MCF 10A (cell line): ENCODE measurements at regions of chr2 and their contacts with region 1.

Region 1: GRCh38 chr2:42859006-42859552 is 66.7 kb upstream of the HAAO start:
- DNase-seq: peak; percentile 82
- H3K4me3 Mint-ChIP-seq: no peak overlapping the region
- H3K27ac Mint-ChIP-seq: no peak overlapping the region
- H3K4me1 Mint-ChIP-seq: peaks cover 12% of the 10 kb centered on the region
- H3K27me3 Mint-ChIP-seq: no peaks in the 10 kb centered on the region
- CTCF ChIP-seq: peak; percentile 91

Region 2: GRCh38 chr2:42547014-42547413 is 312.1 kb before region 1 on chr2:
- CTCF ChIA-PET with region 1: no interaction called
- POLR2A ChIA-PET with region 1: no interaction called
- intact Hi-C with region 1: no loop called
- DNase-seq: no peak
- H3K4me3 Mint-ChIP-seq: no peak overlapping the region
- H3K27ac Mint-ChIP-seq: no peak overlapping the region
- H3K4me1 Mint-ChIP-seq: no peaks in the 10 kb centered on the region
- H3K27me3 Mint-ChIP-seq: no peaks in the 10 kb centered on the region
- CTCF ChIP-seq: no peak

Region 3: GRCh38 chr2:42844901-42845821 is 13.9 kb before region 1 on chr2:
- CTCF ChIA-PET with region 1: interaction called, 12 read pairs
- POLR2A ChIA-PET with region 1: no interaction called
- intact Hi-C with region 1: no loop called
- DNase-seq: no peak
- H3K4me3 Mint-ChIP-seq: no peak overlapping the region
- H3K27ac Mint-ChIP-seq: peak overlapping the region; percentile 32
- H3K4me1 Mint-ChIP-seq: peaks cover 6% of the 10 kb centered on the region
- H3K27me3 Mint-ChIP-seq: no peaks in the 10 kb centered on the region
- CTCF ChIP-seq: no peak

Region 4: GRCh38 chr2:42874949-42875801 is 16.1 kb after region 1 on chr2:
- CTCF ChIA-PET with region 1: interaction called, 10 read pairs
- POLR2A ChIA-PET with region 1: no interaction called
- intact Hi-C with region 1: no loop called
- DNase-seq: no peak
- H3K4me3 Mint-ChIP-seq: no peak overlapping the region
- H3K27ac Mint-ChIP-seq: no peak overlapping the region
- H3K4me1 Mint-ChIP-seq: no peaks in the 10 kb centered on the region
- H3K27me3 Mint-ChIP-seq: no peaks in the 10 kb centered on the region
- CTCF ChIP-seq: no peak

Region 5: DNA sequence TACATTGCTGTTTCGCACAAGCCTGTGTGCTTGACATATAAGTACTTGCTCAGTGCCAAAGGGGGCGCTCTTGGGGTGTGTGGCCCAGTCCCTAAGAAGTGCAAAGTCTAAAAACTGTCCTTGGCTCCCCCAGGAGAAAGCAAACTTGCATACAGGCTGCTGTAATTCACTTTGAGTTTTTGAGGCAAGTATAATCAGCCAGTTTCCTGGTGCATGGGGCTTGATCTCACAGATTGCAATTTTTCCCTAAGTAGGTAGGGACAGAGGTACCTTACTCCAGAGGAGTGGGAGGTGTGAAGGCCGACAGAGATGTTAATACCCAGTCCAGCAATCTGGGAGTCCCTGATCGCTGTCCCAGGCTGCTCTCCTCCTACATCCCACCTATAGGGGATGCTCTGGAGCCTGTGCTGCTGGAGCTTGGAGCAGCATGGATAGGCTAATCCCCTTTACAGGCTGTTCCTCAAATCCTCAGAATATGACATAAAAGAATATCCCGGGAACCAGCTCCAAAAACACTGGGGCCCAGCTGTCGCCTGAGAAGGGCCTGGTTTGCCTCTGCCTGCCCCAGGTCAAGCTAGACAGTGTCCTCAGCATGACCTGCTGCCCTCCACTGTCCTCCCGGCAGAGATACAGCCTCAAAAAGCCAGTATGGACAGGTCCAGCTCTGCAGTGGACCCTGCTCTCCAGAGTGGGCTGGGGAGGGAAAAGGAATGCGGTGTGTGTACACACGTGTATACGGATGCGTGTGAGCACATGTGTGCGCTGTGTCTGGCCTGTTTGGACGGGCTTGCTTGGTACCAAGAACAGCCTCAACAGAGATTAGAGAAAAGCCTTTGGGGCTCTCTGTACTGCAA is 69.8 kb after region 1 on chr2:
- CTCF ChIA-PET with region 1: interaction called, 7 read pairs
- POLR2A ChIA-PET with region 1: no interaction called
- intact Hi-C with region 1: loop called (anchors 5 kb)
- DNase-seq: no peak
- H3K4me3 Mint-ChIP-seq: no peak overlapping the region
- H3K27ac Mint-ChIP-seq: peak overlapping the region; percentile 22
- H3K4me1 Mint-ChIP-seq: peaks cover 25% of the 10 kb centered on the region
- H3K27me3 Mint-ChIP-seq: no peaks in the 10 kb centered on the region
- CTCF ChIP-seq: peak; percentile 20

Region 6: DNA sequence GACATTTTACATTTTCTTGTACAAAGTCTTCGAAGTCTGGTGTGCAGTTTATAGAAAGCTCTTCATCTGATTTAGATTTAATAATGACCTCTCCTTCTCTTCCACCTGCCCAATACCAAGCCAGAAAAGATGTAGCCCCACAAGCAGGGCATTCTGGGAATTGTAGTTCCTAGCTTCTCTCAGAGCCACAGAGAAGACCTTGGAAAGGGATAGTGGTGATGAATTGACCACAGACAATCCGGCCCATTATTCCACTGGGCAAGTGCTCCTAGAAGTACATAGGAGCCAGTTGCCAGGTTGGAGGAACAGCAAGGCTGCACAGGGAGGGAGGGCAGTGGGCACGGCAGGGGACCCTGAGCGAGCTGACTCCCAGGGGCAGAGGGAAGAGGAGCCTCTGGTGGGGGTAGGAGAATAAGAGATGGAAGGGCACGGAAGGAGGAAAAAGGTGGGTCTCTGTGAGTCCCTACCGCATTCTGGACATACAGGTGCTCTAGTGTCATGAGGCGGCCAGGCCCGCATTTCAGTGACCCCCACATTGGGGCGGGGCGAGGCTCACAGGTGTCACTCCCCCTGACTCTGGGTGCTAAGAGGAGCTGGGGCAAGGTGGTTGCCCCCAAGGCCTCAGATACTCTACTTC is 85.8 kb after region 1 on chr2:
- CTCF ChIA-PET with region 1: interaction called, 48 read pairs
- POLR2A ChIA-PET with region 1: no interaction called
- intact Hi-C with region 1: loop called (anchors 5 kb)
- DNase-seq: no peak
- H3K4me3 Mint-ChIP-seq: no peak overlapping the region
- H3K27ac Mint-ChIP-seq: no peak overlapping the region
- H3K4me1 Mint-ChIP-seq: peaks cover 10% of the 10 kb centered on the region
- H3K27me3 Mint-ChIP-seq: no peaks in the 10 kb centered on the region
- CTCF ChIP-seq: no peak

Region 7: GRCh38 chr2:43086451-43087221 is 227.6 kb after region 1 on chr2:
- CTCF ChIA-PET with region 1: no interaction called
- POLR2A ChIA-PET with region 1: no interaction called
- intact Hi-C with region 1: loop called (anchors 5 kb)
- DNase-seq: peak; percentile 98
- H3K4me3 Mint-ChIP-seq: peak overlapping the region; percentile 48
- H3K27ac Mint-ChIP-seq: peak overlapping the region; percentile 94
- H3K4me1 Mint-ChIP-seq: peaks cover 60% of the 10 kb centered on the region
- H3K27me3 Mint-ChIP-seq: no peaks in the 10 kb centered on the region
- CTCF ChIP-seq: no peak